ENCODE measurements at regions of chr17 and their contacts with region 1.

Region 1: DNA sequence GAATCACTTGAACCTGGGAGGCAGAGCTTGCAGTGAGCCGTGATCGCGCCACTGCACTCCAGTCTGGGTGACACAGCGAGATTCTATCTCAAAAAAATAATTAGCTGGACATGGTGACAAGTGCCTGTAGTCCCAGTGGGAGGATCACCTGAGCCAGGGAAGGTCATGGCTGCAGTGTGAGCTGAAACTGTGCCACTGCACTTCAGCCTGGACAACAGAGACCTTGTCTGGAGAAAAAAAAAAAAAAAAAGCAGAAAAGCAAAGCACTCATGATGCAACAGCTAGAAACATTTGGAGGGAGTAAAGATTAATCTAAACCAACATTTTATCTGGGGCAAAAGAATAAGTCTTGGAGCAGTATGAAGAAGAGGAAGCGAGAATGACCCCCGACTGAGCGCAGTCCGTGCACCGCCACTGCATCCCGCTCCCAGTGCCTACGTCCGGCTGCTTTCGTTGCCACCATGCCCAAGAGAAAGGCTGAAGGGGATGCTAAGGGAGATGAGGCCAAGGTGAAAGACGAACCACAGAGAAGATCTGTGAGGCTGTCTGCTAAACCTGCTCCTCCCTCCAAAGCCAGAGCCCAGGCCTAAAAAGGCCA is 8.2 kb downstream of the PRPSAP1 start:
- DNase-seq: peak; percentile 75
- ATAC-seq: peak; percentile 91
- H3K4me3 ChIP-seq: no peak overlapping the region
- H3K27ac ChIP-seq: peak overlapping the region; percentile 77
- H3K4me1 ChIP-seq: peaks cover 42% of the 10 kb centered on the region
- H3K27me3 ChIP-seq: no peaks in the 10 kb centered on the region
- CTCF ChIP-seq: no peak; the same call in 1 of the 2 replicates
- EP300 ChIP-seq: peak in 1 of 2 experiments; percentile 58; a peak in 2 of 4 replicates
- POLR2A ChIP-seq: no peak
- RAD21 ChIP-seq: no peak

Region 2: DNA sequence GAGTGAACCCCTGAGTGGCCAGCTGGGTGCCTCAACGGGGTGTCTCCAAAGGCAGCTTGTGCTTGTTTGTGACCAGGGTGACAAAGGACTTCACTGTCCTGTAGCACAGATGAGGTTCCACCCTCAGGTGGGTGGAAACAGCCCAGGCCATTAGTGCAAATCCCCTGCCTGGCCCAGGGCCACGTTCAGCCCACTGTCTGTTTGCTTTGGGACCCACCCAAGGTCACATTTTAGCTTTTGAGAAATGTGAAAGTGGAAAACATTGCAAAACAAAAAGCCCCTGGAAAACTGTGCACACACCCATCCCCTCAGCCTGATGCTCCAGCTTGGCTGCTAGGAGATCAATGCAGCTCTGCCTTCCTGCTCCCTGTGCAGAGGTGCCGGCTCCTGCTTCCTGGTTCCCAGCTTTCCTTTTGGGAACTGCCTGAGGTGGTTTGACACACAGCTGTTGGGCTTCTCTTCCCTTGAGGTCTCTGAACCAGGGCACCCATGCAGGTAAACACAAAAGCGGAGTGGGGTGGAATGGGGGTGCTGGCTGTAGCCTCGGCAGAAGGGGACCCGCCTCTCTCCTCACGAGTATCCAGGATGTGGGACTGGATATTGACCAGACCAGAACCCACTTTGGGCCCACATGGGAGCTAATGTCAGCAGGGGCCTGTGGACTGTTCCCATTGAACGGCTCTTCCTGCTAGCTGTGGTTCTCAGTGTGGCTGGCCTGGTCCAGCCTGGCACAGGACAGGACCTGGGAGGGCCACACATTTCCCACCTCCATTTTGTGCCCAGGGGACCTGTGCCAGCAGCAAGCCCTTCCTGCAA is 31.1 kb after region 1 on chr17:
- CTCF ChIA-PET with region 1: no interaction called
- POLR2A ChIA-PET with region 1: interaction called, 1,379 read pairs
- in situ Hi-C with region 1: no loop called
- intact Hi-C with region 1: no loop called
- DNase-seq: peak; percentile 100
- ATAC-seq: peak; percentile 88
- H3K4me3 ChIP-seq: peak overlapping the region; percentile 63 to 82 (median 66)
- H3K27ac ChIP-seq: peak overlapping the region; percentile 90
- H3K4me1 ChIP-seq: peaks cover 97% of the 10 kb centered on the region
- H3K27me3 ChIP-seq: no peaks in the 10 kb centered on the region
- CTCF ChIP-seq: peak; percentile 35; the same call in 1 of the 2 replicates
- EP300 ChIP-seq: peak; percentile 83 to 97; a peak in 3 of 4 replicates
- POLR2A ChIP-seq: peak in 1 of 2 experiments; percentile 83; a peak in 2 of 4 replicates
- RAD21 ChIP-seq: peak; percentile 53

Measured in HepG2 (cell line).